ENCODE measurements at regions of chr5 and their contacts with region 1.

Region 1: GRCh38 chr5:127959152-127959764 is 124.3 kb upstream of the SLC12A2 start:
- DNase-seq: peak; percentile 83
- H3K4me3 ChIP-seq: no peak overlapping the region
- H3K27ac ChIP-seq: peak overlapping the region; percentile 38 to 71 (median 54)
- H3K4me1 ChIP-seq: peaks cover 0 to 51% (median 40%) of the 10 kb centered on the region in 4 donors
- H3K27me3 ChIP-seq: no peaks in the 10 kb centered on the region
- CTCF ChIP-seq: no peak
- EP300 ChIP-seq: no peak
- POLR2A ChIP-seq: no peak

Region 2: DNA sequence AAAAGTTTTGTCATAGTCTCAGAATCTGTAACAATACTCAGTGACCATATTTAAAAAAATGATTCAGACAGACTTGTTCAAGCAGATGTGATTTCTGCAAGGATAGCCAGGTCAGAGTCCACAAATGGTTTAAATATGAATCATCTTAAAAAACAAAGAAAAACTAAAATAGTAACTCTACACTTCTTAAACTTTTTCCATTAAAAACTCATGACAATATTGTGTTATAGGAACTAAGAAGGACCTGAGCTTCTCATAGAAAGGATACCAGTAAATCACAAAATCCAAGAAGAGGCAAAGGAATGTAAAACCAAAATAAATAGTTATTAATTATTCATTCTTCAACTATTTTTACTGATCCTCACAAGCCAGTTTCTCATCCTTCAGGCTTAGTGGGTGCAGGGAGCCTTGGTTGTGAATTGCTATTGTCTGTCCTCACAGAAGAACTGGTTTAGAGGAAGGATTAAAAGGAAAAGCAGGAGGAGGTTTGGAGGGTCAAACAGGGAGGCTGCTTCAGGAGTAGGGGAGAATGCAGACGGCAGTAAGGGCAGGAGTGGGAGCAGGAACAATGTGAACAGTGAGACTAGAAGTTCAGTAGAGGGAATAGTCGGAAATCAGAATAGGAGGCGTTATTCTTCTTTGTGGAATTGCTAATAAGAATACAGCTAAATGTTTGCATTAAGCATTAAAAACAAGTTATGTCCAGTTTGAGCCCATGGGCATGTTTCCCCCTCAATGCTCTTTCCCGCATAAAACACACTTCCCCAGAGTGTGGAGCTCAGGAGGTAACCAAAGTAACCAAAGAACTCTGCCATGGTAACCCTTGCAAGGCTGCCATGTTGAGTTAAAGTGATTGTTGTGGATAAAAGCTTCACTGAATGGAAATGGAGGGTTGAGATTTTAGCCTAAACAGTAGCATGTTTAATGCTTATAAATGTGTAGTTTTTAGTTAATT is 145.3 kb before region 1 on chr5:
- intact Hi-C with region 1: loop called (anchors 10 kb)
- DNase-seq: no peak
- H3K4me3 ChIP-seq: no peak overlapping the region
- H3K27ac ChIP-seq: peak overlapping the region; percentile 59 to 78 (median 76)
- H3K4me1 ChIP-seq: peaks cover 0 to 45% (median 33%) of the 10 kb centered on the region in 4 donors
- H3K27me3 ChIP-seq: no peaks in the 10 kb centered on the region
- CTCF ChIP-seq: no peak
- EP300 ChIP-seq: no peak
- POLR2A ChIP-seq: no peak

Measured in sigmoid colon (tissue), 7 donors.